ENCODE measurements at regions of chr3 and their contacts with region 1.

Region 1: GRCh38 chr3:32420126-32421038 is 28.7 kb downstream of the CMTM7 start:
- DNase-seq: peak in 4 of 14 experiments; percentile 39 to 55 (median 44)
- ATAC-seq: peak; percentile 35
- H3K4me3 ChIP-seq: no peak overlapping the region
- H3K4me3 Mint-ChIP-seq: peak overlapping the region; percentile 71
- H3K27ac ChIP-seq: peak overlapping the region; percentile 44 to 48
- H3K27ac Mint-ChIP-seq: peak overlapping the region; percentile 95
- H3K4me1 ChIP-seq: peaks cover 69% of the 10 kb centered on the region
- H3K4me1 Mint-ChIP-seq: peaks cover 99% of the 10 kb centered on the region
- H3K27me3 ChIP-seq: no peaks in the 10 kb centered on the region
- H3K27me3 Mint-ChIP-seq: no peaks in the 10 kb centered on the region
- CTCF ChIP-seq: no peak

Region 2: GRCh38 chr3:32391643-32392535 is 28.5 kb before region 1 on chr3 and contains the start of gene CMTM7:
- CTCF ChIA-PET with region 1: interaction called, 3 read pairs
- POLR2A ChIA-PET with region 1: interaction called, 24 read pairs
- intact Hi-C with region 1: no loop called
- DNase-seq: peak; percentile 32 to 81 (median 52)
- ATAC-seq: peak; percentile 54
- H3K4me3 ChIP-seq: peak within 1 kb of the TSS; percentile 92
- H3K4me3 Mint-ChIP-seq: peak within 1 kb of the TSS; percentile 97
- H3K27ac ChIP-seq: peak within 1 kb of the TSS; percentile 77 to 79
- H3K27ac Mint-ChIP-seq: peak within 1 kb of the TSS; percentile 91
- H3K4me1 ChIP-seq: peaks cover 47% of the 10 kb centered on the region
- H3K4me1 Mint-ChIP-seq: peaks cover 61% of the 10 kb centered on the region
- H3K27me3 ChIP-seq: no peaks in the 10 kb centered on the region
- H3K27me3 Mint-ChIP-seq: no peaks in the 10 kb centered on the region
- CTCF ChIP-seq: no peak
- total RNA-seq, gene CMTM7: 31.5 to 35.2 TPM

Region 3: GRCh38 chr3:32438596-32439344 is 18.4 kb after region 1 on chr3:
- CTCF ChIA-PET with region 1: interaction called, 3 read pairs
- POLR2A ChIA-PET with region 1: interaction called, 49 read pairs
- intact Hi-C with region 1: loop called in 1 of 2 experiments (anchors 2 kb)
- DNase-seq: peak in 2 of 14 experiments; percentile 35 to 40
- ATAC-seq: peak; percentile 50
- H3K4me3 ChIP-seq: no peak overlapping the region
- H3K4me3 Mint-ChIP-seq: peak overlapping the region; percentile 65
- H3K27ac ChIP-seq: peak overlapping the region in 1 of 2 donors; percentile 32
- H3K27ac Mint-ChIP-seq: peak overlapping the region; percentile 95
- H3K4me1 ChIP-seq: peaks cover 58% of the 10 kb centered on the region
- H3K4me1 Mint-ChIP-seq: peaks cover 72% of the 10 kb centered on the region
- H3K27me3 ChIP-seq: no peaks in the 10 kb centered on the region
- H3K27me3 Mint-ChIP-seq: no peaks in the 10 kb centered on the region
- CTCF ChIP-seq: no peak

Region 4: DNA sequence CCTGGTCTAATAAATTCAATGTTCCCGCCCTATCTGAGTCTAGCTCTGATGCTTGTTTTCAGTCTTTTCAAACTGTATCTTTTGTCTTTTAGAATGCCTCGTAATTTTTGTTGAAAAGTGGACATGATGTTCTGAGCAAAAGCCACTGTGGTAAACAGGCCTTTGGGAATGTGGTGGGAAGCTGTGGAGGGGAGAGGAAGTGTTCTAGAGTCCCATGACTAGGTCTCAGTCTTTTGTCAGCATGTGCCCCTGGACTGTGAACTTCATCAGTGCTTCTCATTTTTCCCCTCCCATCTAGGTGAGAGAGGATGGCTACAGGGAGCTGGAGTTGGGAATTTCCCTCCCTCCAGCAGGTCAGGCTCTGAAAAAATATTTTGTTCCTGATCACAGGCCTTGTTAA is 764.5 kb after region 1 on chr3:
- CTCF ChIA-PET with region 1: no interaction called
- POLR2A ChIA-PET with region 1: no interaction called
- intact Hi-C with region 1: no loop called
- DNase-seq: no peak
- ATAC-seq: no peak
- H3K4me3 ChIP-seq: no peak overlapping the region
- H3K4me3 Mint-ChIP-seq: no peak overlapping the region
- H3K27ac ChIP-seq: no peak overlapping the region
- H3K27ac Mint-ChIP-seq: no peak overlapping the region
- H3K4me1 ChIP-seq: no peaks in the 10 kb centered on the region
- H3K4me1 Mint-ChIP-seq: no peaks in the 10 kb centered on the region
- H3K27me3 ChIP-seq: peaks cover 0 to 2% of the 10 kb centered on the region in 2 experiments
- H3K27me3 Mint-ChIP-seq: peaks cover 33% of the 10 kb centered on the region
- CTCF ChIP-seq: no peak

Measured in CD4-positive, alpha-beta T cell (primary cell).